ENCODE measurements at regions of chr17 and their contacts with region 1.

Region 1: DNA sequence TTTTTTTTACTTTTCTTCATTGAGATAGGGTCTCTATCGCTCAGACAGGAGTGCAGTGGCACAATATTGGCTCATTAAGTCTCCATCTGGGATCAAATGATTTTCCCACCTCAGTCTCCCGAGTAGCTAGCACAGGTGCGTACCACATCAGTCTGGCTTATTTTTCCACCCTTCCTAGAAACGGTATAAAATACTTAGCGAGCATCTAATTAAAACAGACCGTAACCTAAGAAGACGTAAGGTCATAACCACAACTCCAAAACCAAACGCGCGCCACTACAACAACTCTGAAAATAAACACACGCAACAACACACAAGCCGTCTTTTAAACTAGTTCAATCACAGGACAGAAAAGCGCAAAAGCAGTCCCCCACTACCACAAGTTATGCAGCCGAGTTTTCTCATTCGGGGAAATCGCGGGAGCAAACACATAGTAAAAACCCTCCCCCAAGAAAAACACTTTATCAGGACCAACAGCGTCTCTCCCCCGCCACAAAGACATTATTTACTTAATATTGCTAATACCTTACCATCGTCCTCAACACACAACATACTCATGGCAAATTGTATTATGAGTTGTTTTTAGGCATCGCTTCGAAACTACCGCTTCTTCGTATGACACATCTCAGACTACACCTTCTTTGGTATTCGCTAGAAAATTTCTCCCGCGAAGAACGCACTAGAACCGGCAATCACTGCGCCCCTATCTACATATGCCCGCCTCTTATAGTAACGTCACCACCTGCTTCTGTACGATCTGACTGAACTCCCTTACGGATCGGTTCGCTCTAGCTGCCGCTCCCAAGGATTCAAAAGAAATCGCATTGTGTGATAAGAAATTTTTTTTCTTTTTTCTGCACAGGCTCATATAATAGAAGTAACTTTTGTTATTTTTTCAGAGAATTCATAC is 32.8 kb downstream of the TEX14 start:
- DNase-seq: peak; percentile 80 to 99
- H3K4me3 ChIP-seq: peak overlapping the region; percentile 61
- H3K27ac ChIP-seq: peak overlapping the region; percentile 89
- H3K4me1 ChIP-seq: peaks cover 14% of the 10 kb centered on the region
- H3K27me3 ChIP-seq: no peaks in the 10 kb centered on the region
- CTCF ChIP-seq: no peak

Region 2: GRCh38 chr17:57481910-57482391 is 1177.1 kb before region 1 on chr17:
- CTCF ChIA-PET with region 1: no interaction called
- POLR2A ChIA-PET with region 1: no interaction called
- intact Hi-C with region 1: no loop called
- DNase-seq: peak in 1 of 2 experiments; percentile 46
- H3K4me3 ChIP-seq: no peak overlapping the region
- H3K27ac ChIP-seq: no peak overlapping the region
- H3K4me1 ChIP-seq: peaks cover 11% of the 10 kb centered on the region
- H3K27me3 ChIP-seq: peaks cover 16% of the 10 kb centered on the region
- CTCF ChIP-seq: no peak

Region 3: DNA sequence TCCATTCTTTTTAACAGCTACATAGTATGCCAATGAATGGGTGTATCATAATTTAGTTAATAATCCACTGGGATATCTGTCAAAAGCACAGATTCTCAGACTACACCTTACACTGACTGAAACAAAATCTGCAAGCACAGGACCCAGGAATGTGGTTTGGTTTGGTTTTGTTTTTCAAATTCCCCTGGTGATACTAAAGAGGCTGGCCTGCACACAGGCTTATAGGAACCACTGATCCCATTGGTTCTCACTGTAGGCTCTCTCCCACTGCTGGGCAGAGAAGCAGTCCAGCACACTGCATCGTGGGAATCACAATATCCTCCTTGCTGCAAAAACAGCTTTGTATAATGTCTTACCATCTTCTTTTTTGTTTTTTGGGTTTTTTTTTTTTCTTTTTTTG is 34.3 kb before region 1 on chr17:
- CTCF ChIA-PET with region 1: no interaction called
- POLR2A ChIA-PET with region 1: no interaction called
- intact Hi-C with region 1: no loop called
- DNase-seq: no peak
- H3K4me3 ChIP-seq: no peak overlapping the region
- H3K27ac ChIP-seq: no peak overlapping the region
- H3K4me1 ChIP-seq: no peaks in the 10 kb centered on the region
- H3K27me3 ChIP-seq: 0 out of 2 replicates have a peak, but pooled peaks cover 5% of the 10 kb centered on the region
- CTCF ChIP-seq: no peak

Region 4: DNA sequence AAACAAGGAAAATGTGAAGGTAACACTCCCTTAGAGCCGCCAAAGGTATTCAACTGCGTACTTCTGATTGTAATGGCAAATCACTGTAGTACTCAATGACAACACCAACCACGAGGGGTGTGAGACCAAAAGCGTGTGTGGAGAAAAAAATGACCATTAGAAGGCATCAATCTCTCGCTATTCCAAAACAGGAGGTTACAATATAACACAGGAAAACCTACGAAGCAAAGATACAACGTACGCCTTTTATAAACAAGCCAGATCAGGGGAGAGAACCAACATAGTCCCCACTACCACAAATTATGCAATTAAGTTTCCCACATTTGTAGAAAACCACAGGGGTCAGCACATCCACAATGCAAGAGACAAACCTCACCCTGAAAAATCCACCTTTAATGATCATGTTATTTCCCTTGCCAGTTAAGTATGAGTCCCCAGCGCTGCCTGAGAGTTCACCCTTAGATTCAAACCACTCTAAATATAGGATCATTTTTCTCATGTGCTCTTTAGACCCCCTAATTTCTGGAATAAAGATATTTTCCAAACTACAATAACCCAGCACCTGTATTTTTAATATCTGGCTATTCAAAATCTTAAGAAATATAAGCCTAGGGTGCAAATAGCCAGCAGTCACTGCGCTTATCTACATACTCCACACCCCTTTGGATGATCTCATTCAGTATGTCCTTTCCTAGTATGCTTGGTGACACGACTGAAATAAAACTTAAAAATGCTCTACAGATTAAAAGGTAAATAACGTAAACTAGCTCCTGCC is 20.4 kb after region 1 on chr17:
- CTCF ChIA-PET with region 1: no interaction called
- POLR2A ChIA-PET with region 1: interaction called, 4 read pairs
- intact Hi-C with region 1: loop called (anchors 1 kb)
- DNase-seq: peak; percentile 45 to 99
- H3K4me3 ChIP-seq: peak overlapping the region; percentile 25; the same call in 1 of the 2 replicates
- H3K27ac ChIP-seq: peak overlapping the region; percentile 48
- H3K4me1 ChIP-seq: peaks cover 22% of the 10 kb centered on the region
- H3K27me3 ChIP-seq: no peaks in the 10 kb centered on the region
- CTCF ChIP-seq: no peak; the same call in 1 of the 2 replicates

Region 5: DNA sequence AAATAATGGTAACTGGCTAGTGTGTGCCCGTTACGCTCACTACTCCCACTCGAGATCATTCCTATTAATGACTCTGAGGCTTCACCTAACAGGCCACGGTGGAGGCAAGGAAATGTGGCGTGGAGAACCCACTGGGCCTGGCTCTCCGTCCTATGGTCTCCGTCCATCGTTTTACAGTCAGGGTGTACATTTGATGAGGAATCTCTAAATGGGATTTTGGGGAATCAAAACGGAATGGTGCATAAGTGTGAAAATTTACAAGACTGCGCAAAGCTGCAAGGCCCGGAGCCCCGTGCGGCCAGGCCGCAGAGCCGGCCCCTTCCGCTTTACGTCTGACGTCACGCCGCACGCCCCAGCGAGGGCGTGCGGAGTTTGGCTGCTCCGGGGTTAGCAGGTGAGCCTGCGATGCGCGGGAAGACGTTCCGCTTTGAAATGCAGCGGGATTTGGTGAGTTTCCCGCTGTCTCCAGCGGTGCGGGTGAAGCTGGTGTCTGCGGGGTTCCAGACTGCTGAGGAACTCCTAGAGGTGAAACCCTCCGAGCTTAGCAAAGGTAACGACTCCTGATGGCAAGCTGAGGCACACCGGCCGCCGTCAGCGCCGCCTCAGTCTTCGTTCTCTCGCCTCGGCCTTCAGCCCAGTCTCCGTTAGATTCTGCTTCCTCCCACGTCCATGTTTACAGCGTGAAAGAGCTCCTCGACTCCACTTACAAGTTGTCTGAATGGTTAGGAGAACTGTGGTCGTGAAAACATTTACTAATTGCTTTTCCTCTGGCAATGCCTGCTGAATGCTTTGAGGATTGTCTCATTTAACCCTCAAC is 33.4 kb after region 1 on chr17 and contains the start of gene RAD51C:
- CTCF ChIA-PET with region 1: interaction called, 4 read pairs
- POLR2A ChIA-PET with region 1: no interaction called
- intact Hi-C with region 1: loop called (anchors 2 kb)
- DNase-seq: peak; percentile 77 to 81
- H3K4me3 ChIP-seq: peak within 1 kb of the TSS; percentile 59
- H3K27ac ChIP-seq: peak within 1 kb of the TSS; percentile 62
- H3K4me1 ChIP-seq: peaks cover 24% of the 10 kb centered on the region
- H3K27me3 ChIP-seq: no peaks in the 10 kb centered on the region
- CTCF ChIP-seq: no peak
- total RNA-seq, gene RAD51C: 45.7 and 63.4 TPM in 2 replicates

Region 6: DNA sequence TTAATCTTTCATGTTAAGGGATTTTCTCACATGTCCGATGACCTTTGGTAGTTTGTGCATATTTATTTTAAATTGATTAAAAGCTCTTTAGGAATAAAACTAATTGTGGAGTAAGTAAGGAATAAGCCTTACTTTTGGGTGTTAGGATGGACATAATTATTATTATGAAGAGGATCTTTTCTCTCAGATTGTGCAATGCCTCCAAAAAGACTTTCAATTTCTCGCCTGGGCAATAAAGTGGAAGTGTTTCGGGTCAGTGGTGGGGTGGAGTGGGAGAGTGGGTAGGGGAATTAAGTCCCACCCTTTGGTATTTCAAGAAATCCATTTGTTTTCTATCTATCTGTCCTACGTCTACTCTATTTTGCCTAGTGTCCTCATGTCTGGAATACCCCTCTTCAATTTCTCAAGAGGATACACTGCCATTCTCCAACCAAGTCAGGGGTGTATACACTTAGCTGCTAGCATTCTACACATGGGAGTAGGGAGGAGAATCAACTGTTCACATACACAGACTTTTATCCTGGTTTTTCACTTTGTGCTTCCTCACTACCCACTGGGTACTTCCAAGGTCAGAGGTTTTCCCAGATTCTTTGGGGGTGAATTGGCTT is 226.4 kb after region 1 on chr17:
- CTCF ChIA-PET with region 1: no interaction called
- POLR2A ChIA-PET with region 1: no interaction called
- intact Hi-C with region 1: no loop called
- DNase-seq: no peak
- H3K4me3 ChIP-seq: no peak overlapping the region
- H3K27ac ChIP-seq: no peak overlapping the region
- H3K4me1 ChIP-seq: no peaks in the 10 kb centered on the region
- H3K27me3 ChIP-seq: no peaks in the 10 kb centered on the region; the same call in 1 of the 2 replicates
- CTCF ChIP-seq: no peak

Measured in PC-9 (cell line).